OCI-LY7 (cell line): ENCODE measurements at regions of chr12 and their contacts with region 1.

Region 1: DNA sequence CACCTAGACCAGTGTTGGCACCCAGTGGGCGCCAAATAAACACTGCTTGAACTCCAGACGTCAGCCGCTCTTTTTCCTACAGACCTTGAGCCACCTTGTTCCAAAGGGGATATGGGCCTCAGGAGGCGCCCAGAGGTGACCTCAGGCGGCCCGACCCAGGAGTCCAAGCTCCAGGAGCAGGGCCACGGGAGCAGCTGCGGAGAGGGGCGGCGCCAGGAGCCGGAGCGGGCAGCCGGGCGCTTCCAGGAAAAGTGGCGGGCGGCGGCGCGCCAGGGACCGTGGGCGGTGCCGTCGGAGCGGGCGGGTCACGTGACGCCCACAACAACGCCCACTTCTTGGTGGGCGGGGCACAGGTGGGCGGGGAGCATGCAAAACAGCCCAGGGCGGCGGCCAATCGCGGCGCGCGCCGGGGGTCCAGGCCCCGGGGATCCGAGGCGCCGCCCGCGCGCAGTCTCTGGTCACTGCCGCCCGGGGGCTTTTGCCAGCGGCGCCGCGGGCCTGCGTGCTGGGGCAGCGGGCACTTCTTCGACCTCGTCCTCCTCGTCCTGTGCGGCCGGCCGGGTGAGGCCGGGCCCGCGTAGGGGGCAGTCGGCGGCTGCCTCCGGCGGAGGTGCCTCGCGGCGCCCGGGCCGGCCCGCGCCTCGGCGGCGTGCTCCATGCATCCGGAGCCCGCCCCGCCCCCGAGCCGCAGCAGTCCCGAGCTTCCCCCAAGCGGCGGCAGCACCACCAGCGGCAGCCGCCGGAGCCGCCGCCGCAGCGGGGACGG is at the start of gene ORAI1:
- DNase-seq: peak; percentile 97
- H3K4me3 ChIP-seq: peak within 1 kb of the TSS; percentile 69
- H3K27ac ChIP-seq: peak within 1 kb of the TSS; percentile 70
- H3K4me1 ChIP-seq: peaks cover 37% of the 10 kb centered on the region
- CTCF ChIP-seq: peak; percentile 9; the same call in 1 of the 2 replicates
- total RNA-seq, gene ORAI1: 3.3 and 9.5 TPM in 2 replicates

Region 2: GRCh38 chr12:121550974-121551634 is 75.2 kb before region 1 on chr12:
- CTCF ChIA-PET with region 1: interaction called, 3 read pairs
- POLR2A ChIA-PET with region 1: interaction called, 5 read pairs
- intact Hi-C with region 1: loop called (anchors 1 kb)
- DNase-seq: no peak
- H3K4me3 ChIP-seq: no peak overlapping the region
- H3K27ac ChIP-seq: no peak overlapping the region
- H3K4me1 ChIP-seq: no peaks in the 10 kb centered on the region
- CTCF ChIP-seq: no peak

Region 3: DNA sequence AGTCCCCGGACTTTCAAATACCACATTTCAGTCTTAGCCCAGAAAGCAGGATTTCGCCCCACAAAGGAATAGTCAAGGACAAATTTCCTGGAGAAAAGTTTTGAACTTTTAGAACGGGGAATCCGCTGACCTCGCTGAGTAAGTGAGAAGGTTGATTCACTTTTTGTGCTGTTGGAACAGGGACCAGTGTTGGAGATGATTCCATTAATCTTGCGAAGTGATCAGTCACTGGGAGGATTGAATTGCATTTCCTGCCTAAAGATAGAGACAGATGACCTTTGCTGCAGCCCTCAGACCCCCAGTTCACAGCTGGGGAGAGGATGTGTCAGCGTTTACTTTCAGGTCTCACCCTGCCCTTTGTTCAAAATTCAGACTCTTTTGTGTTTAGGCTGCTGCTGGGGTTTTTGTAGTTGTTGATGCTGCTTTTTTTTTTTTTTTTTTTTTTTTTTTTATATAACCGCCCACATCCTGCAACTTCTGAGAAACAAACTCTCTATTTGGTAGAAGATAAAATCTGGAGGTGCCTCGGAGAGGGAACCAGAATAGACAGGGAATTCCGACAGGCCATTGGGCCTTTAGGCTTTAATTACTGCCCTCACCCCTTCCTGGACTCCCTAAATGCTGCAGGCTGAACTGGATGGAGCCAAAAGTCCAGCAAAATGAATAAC is 35.7 kb before region 1 on chr12:
- CTCF ChIA-PET with region 1: no interaction called
- POLR2A ChIA-PET with region 1: no interaction called
- intact Hi-C with region 1: loop called (anchors 1 kb)
- DNase-seq: peak; percentile 76
- H3K4me3 ChIP-seq: peak overlapping the region; percentile 53
- H3K27ac ChIP-seq: peak overlapping the region; percentile 79
- H3K4me1 ChIP-seq: peaks cover 39% of the 10 kb centered on the region
- CTCF ChIP-seq: no peak

Region 4: DNA sequence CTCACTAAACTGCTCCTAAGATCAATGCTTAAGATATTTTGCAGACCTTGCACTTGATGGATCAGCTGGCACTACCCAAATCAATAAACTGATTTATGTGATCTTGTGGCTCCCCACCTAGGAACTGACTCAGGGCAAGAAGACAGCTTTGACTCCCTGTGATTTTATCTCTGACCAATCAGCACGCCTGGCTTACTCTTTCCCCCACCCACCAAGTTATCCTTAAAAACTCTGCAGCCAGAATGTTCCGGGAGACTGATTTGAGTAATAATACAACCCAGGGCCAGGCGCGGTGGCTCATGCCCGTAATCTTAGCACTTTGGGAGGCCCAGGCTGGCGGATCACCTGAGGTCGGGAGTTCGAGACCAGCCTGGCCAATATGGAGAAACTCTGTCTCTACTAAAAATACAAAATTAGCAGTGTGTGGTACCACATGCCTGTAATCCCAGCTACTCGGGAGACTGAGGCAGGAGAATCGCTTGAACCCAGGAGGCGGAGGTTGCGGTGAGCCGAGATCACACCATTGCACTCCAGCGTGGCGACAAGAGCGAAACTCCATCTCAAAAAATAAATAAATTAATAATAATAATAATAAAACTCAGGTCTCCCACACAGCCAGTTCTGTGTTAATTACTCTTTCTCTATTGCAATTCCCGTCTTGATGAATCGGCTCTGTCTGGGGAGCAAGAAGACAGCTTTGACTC is 31.2 kb after region 1 on chr12:
- CTCF ChIA-PET with region 1: interaction called, 5 read pairs
- POLR2A ChIA-PET with region 1: interaction called, 10 read pairs
- intact Hi-C with region 1: no loop called
- DNase-seq: no peak
- H3K4me3 ChIP-seq: no peak overlapping the region
- H3K27ac ChIP-seq: no peak overlapping the region
- H3K4me1 ChIP-seq: no peaks in the 10 kb centered on the region
- CTCF ChIP-seq: no peak

Region 5: GRCh38 chr12:121678716-121679580 is 52.7 kb after region 1 on chr12:
- CTCF ChIA-PET with region 1: no interaction called
- POLR2A ChIA-PET with region 1: interaction called, 4 read pairs
- intact Hi-C with region 1: loop called (anchors 2 kb)
- DNase-seq: no peak
- H3K4me3 ChIP-seq: no peak overlapping the region
- H3K27ac ChIP-seq: no peak overlapping the region
- H3K4me1 ChIP-seq: peaks cover 8% of the 10 kb centered on the region
- CTCF ChIP-seq: no peak

Region 6: DNA sequence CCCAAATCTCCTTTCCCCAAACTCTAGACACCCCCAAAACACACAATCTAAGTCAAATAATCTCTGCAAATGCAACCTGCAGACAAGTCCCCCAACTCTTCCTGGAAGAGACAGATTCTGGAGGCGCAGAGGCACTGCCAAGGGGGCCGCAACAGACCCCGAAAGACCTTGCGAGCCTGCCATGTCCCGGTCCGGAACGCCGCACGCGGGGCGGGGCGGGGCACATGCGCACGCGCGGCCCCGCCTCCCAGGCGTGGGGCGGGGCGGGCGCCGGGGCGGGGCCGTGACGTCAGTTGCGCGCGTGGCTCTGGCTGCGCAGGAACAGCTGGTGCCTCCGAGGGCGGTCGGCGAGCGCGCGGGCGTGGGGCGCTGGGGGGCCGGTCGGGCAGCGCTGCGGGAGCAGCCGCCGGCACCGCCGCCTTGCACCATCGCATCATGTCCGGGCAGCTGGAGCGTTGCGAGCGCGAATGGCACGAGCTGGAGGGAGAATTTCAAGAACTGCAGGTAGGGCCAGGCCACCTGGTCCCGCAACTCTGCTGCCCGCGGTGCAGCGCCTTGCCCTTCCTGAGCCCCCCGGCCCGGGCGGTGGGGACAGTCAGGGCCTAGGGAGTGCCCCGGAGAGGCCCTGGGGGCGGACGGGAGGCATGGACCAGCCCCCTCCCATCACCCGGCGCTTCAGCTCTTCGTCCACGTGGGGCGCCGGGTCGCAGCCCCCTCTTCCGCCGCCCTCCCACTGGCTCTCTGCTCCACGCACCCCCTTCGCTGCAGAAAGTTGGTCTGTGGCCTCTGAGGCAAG is 86.4 kb after region 1 on chr12 and contains the start of gene TMEM120B:
- CTCF ChIA-PET with region 1: no interaction called
- POLR2A ChIA-PET with region 1: no interaction called
- intact Hi-C with region 1: no loop called
- DNase-seq: peak; percentile 84
- H3K4me3 ChIP-seq: peak within 1 kb of the TSS; percentile 85
- H3K27ac ChIP-seq: no peak within 1 kb of the TSS
- H3K4me1 ChIP-seq: peaks cover 40% of the 10 kb centered on the region
- CTCF ChIP-seq: peak; percentile 54
- total RNA-seq, gene TMEM120B: 9.3 and 12.4 TPM in 2 replicates